HEK293 (cell line): ENCODE measurements at regions of chr15 and their contacts with region 1.

Region 1: GRCh38 chr15:65400760-65401610 is 21.8 kb downstream of the IGDCC4 start:
- H3K4me3 ChIP-seq: no peak overlapping the region
- H3K27ac ChIP-seq: peak overlapping the region; percentile 36; the same call in 1 of the 2 replicates
- H3K4me1 ChIP-seq: peaks cover 12% of the 10 kb centered on the region
- CTCF ChIP-seq: peak; percentile 92

Region 2: GRCh38 chr15:65318870-65319356 is 82.1 kb before region 1 on chr15:
- CTCF ChIA-PET with region 1: interaction called, 120 read pairs
- POLR2A ChIA-PET with region 1: interaction called, 3 read pairs
- H3K4me3 ChIP-seq: no peak overlapping the region
- H3K27ac ChIP-seq: no peak overlapping the region
- H3K4me1 ChIP-seq: no peaks in the 10 kb centered on the region
- CTCF ChIP-seq: peak; percentile 98

Region 3: GRCh38 chr15:65414841-65415621 is 14.0 kb after region 1 on chr15:
- CTCF ChIA-PET with region 1: interaction called, 40 read pairs
- POLR2A ChIA-PET with region 1: interaction called, 3 read pairs
- H3K4me3 ChIP-seq: no peak overlapping the region
- H3K27ac ChIP-seq: peak overlapping the region; percentile 44
- H3K4me1 ChIP-seq: peaks cover 23% of the 10 kb centered on the region
- CTCF ChIP-seq: peak; percentile 73; the same call in 1 of the 2 replicates

Region 4: DNA sequence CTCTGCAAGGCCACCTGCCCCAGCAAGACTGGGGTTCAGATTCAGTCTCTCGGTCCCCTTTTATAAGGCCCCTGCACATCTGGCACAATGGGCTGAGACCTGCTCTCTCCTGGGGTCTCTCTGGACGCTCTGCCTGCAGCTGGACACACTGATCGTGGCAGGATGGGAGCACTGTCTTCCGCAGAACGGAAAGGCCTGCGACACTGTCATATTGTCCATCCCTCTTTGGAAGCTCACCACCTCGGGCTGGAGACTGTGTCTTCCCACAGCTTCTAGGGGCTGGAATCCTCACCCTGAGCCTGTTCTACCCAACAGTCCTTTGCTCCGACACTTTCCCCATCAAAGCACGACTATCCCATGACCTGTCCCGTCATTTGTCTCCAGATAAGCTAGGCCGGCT is 33.2 kb after region 1 on chr15:
- CTCF ChIA-PET with region 1: interaction called, 14 read pairs
- POLR2A ChIA-PET with region 1: no interaction called
- H3K4me3 ChIP-seq: no peak overlapping the region
- H3K27ac ChIP-seq: no peak overlapping the region
- H3K4me1 ChIP-seq: peaks cover 5% of the 10 kb centered on the region; the same call in 1 of the 2 replicates
- CTCF ChIP-seq: no peak

Region 5: DNA sequence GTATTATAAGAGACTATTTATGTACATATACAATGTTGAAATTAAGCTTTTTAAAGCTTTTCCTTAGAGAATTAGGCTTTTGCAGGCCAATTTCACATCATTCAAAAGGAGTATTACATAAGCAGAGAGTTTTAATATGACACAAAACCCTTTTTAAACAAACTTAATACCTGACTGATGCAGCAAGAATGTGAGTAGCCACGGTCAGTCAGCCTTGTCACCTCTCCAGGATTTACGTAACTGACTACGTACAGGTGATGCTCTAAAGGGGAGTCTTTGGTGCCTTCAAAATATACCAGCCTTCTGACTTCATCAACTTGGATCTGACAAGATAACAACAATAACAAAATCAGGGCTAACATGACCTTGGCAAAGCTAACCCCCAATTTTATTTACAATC is 65.9 kb after region 1 on chr15:
- CTCF ChIA-PET with region 1: interaction called, 20 read pairs
- POLR2A ChIA-PET with region 1: interaction called, 4 read pairs
- H3K4me3 ChIP-seq: no peak overlapping the region
- H3K27ac ChIP-seq: no peak overlapping the region
- H3K4me1 ChIP-seq: no peaks in the 10 kb centered on the region
- CTCF ChIP-seq: no peak